ENCODE measurements at regions of chr5 and their contacts with region 1.

Region 1: GRCh38 chr5:139273572-139274289 is 19.8 kb upstream of the MATR3 start:
- DNase-seq: peak; percentile 80 to 94
- H3K4me3 ChIP-seq: peak overlapping the region; percentile 92
- H3K27ac ChIP-seq: peak overlapping the region; percentile 81
- H3K4me1 ChIP-seq: peaks cover 45% of the 10 kb centered on the region
- H3K27me3 ChIP-seq: no peaks in the 10 kb centered on the region
- CTCF ChIP-seq: no peak

Region 2: DNA sequence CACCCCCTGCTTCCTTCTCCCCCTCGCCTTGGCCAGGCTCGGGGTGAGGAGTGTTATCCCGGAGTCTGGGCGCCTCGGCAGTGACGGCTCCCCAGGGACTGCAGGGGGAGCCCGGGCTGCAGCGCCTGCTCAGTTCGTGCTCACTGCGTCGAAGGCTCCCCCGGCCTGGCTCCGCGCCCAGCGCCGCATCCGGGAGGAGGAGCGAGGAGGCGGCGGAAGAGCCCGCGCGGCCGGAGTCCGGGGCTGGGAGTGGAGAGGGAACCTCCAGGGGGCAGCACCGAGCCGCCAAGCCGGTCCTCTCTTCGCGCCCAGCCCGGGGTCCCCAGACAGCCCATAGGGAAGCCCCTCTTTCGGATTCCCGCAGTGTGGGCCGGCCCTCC is 809.7 kb before region 1 on chr5:
- CTCF ChIA-PET with region 1: no interaction called
- POLR2A ChIA-PET with region 1: interaction called, 11 read pairs
- intact Hi-C with region 1: no loop called
- DNase-seq: peak; percentile 78 to 94
- H3K4me3 ChIP-seq: peak overlapping the region; percentile 80
- H3K27ac ChIP-seq: peak overlapping the region; percentile 81
- H3K4me1 ChIP-seq: peaks cover 6% of the 10 kb centered on the region
- H3K27me3 ChIP-seq: no peaks in the 10 kb centered on the region
- CTCF ChIP-seq: peak; percentile 93

Region 3: DNA sequence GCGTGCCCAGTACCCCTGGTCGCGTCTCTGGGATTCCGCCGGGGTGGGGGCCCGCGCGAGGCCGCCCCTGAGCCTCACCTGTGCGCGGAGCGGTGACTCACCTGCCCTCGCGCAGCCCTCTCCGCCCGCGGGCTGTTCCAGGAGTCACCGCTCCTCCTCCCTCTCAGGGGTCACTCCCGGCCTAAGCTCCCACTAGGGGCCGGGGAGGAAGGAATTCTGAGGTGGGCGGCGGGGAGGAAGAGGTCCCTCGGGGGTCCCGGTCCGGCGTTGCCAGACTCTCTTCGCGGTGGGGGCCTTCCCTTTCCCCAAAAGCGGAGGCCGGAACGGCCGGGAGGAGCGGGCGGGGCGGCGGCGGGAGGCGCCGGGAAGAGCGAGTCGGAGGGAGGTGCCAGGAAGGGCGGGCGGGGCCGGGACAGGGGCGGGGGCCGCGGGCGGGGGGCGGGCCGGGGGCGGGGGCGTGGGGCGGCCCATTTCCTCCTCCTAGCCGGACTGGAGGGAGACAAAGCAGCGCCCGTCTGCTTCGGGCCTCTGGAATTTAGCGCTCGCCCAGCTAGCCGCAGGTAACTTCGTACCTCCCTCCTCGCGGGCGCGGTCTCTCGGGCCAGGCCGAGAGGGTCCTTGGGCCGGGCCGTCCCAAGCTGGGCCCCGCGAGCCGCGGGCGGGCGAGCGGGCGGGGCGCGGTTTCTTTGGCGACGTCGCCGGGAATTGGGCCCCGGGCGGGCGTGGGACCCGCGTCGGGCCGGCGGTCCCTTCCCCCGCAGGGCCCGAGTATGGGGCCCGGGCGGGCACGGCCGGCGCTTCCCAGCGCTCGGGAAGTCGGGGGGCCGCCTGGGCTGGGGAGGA is 520.6 kb before region 1 on chr5 and contains the start of gene CTNNA1:
- CTCF ChIA-PET with region 1: no interaction called
- POLR2A ChIA-PET with region 1: no interaction called
- intact Hi-C with region 1: loop called (anchors 10 kb)
- DNase-seq: peak; percentile 70 to 89
- H3K4me3 ChIP-seq: peak within 1 kb of the TSS; percentile 60
- H3K27ac ChIP-seq: peak within 1 kb of the TSS; percentile 74
- H3K4me1 ChIP-seq: peaks cover 30% of the 10 kb centered on the region
- H3K27me3 ChIP-seq: no peaks in the 10 kb centered on the region
- CTCF ChIP-seq: no peak
- total RNA-seq, gene CTNNA1: 91.7 and 94.0 TPM in 2 replicates

Region 4: GRCh38 chr5:138926688-138927448 is 346.9 kb before region 1 on chr5:
- CTCF ChIA-PET with region 1: no interaction called
- POLR2A ChIA-PET with region 1: interaction called, 17 read pairs
- intact Hi-C with region 1: no loop called
- DNase-seq: no peak
- H3K4me3 ChIP-seq: no peak overlapping the region
- H3K27ac ChIP-seq: no peak overlapping the region
- H3K4me1 ChIP-seq: no peaks in the 10 kb centered on the region
- H3K27me3 ChIP-seq: no peaks in the 10 kb centered on the region
- CTCF ChIP-seq: no peak

Region 5: DNA sequence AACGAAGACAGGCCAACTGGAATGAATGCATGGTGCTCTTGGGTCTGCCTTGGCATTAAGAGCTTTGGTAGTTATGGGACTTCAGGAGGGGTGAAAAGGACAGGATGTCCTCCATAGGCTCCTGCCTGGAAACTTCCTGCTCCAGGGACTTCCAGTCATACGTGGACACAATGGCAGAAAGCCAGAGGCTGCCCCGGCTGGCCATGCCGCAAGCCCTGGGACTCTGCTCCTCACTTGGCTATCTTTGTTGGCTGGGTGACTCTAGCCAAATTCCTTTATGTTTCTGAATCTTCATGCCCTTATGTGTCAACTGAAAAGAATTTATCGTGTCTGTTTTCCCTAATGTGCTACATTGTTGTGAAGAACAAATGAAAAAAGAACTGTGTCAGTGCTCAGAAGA is 212.5 kb before region 1 on chr5:
- CTCF ChIA-PET with region 1: no interaction called
- POLR2A ChIA-PET with region 1: interaction called, 16 read pairs
- intact Hi-C with region 1: no loop called
- DNase-seq: peak in 1 of 2 experiments; percentile 15
- H3K4me3 ChIP-seq: no peak overlapping the region
- H3K27ac ChIP-seq: no peak overlapping the region
- H3K4me1 ChIP-seq: peaks cover 38% of the 10 kb centered on the region
- H3K27me3 ChIP-seq: no peaks in the 10 kb centered on the region
- CTCF ChIP-seq: no peak

Region 6: GRCh38 chr5:139232147-139232724 is 41.5 kb before region 1 on chr5:
- CTCF ChIA-PET with region 1: interaction called, 10 read pairs
- POLR2A ChIA-PET with region 1: no interaction called
- intact Hi-C with region 1: no loop called
- DNase-seq: no peak
- H3K4me3 ChIP-seq: no peak overlapping the region
- H3K27ac ChIP-seq: no peak overlapping the region
- H3K4me1 ChIP-seq: no peaks in the 10 kb centered on the region
- H3K27me3 ChIP-seq: no peaks in the 10 kb centered on the region
- CTCF ChIP-seq: no peak

Region 7: DNA sequence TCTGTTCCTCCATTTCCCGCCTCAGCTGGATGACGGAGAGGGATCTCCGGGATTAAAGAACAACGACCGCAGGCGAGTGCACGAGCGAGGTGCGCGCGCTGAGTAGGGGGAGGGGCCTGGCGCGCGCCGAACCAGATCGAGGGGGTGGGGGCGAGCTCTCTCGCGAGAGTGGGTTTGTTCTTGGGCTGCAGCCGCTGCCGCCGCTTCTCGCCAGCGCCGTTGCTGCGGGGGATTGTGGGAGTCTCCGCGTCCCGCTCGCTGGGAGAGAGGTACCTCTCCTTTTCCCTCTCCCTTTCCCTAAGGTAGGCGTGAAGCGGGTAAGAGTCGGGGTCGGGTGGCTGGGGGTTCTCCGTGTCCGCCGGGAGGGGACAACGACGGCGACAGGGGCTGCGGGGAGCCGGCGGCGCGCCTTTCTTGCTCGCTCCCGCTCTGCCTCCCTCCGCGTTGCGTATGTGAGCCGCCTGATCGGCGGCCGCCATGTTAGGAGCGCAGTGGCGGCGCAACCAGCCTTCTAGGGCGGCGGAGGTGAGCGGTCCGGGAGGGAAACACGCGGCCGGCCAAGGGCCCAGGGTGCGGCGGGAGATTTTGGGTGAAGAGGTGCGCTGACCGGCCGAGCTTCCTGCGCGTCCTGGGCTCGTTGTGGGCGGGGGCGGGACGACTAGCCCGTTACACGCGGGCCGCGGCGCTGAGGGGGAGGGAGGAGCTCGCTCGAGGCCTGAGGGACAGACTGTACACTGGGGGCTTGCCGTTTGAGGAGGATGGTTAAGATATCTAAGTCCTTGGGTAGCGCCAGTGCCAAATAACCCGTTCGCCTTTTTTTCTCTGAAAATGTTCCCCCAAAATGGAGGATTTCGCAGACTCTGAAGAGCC is 20.0 kb after region 1 on chr5 and contains the start of gene MATR3:
- CTCF ChIA-PET with region 1: interaction called, 4 read pairs
- POLR2A ChIA-PET with region 1: interaction called, 12 read pairs
- intact Hi-C with region 1: no loop called
- DNase-seq: peak; percentile 85 to 92
- H3K4me3 ChIP-seq: peak within 1 kb of the TSS; percentile 94
- H3K27ac ChIP-seq: peak within 1 kb of the TSS; percentile 97
- H3K4me1 ChIP-seq: peaks cover 28% of the 10 kb centered on the region
- H3K27me3 ChIP-seq: no peaks in the 10 kb centered on the region
- CTCF ChIP-seq: no peak
- total RNA-seq, gene MATR3: 129 and 145 TPM in 2 replicates

Region 8: DNA sequence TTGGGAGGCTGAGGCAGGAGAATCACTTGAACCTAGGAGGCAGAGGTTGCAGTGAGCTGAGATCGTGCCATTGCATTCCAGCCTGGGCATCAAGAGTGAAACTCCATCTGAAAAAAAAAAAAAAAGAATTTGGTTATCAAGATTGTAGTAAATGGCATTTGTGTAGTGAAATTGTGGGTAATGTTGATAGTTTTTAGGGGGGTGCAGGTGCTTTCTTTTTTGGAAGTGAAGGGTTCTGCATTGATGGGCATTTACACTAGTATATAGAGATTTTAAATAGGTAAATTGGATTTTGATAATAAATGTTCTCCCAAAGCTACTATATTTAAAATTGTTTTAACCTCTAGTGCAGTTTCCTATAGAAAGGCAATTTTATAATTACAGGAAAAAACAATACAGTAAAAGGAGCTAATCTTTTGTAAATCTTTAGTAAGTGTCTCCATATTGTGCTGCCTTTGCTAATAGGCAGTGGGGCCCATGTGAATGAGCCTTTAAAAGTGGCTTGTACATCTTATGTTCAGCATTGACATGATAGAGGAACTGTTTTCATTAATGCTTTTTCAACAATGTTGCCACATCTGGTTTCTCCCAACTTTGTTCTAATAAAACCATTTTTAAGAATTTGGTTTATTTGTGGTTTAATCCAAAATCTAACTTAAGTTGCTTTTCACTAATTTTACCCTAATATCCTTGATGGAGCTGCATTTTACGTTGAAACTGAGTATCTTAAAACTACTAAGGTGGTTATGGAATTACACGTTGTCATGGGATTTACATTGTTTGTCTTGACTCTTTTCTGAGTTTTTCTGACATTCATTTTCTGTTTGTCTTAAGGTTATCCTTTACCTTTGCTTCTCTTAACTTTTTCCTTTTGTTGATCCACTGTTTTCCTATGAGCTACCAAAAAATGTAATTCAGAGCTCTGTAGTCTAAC is 30.9 kb after region 1 on chr5:
- CTCF ChIA-PET with region 1: no interaction called
- POLR2A ChIA-PET with region 1: no interaction called
- intact Hi-C with region 1: no loop called
- DNase-seq: no peak
- H3K4me3 ChIP-seq: no peak overlapping the region
- H3K27ac ChIP-seq: 0 out of 2 replicates have a peak overlapping the region, but pooled peaks have one; percentile 23
- H3K4me1 ChIP-seq: peaks cover 30% of the 10 kb centered on the region
- H3K27me3 ChIP-seq: no peaks in the 10 kb centered on the region
- CTCF ChIP-seq: no peak

Region 9: GRCh38 chr5:139492700-139493192 is 219.0 kb after region 1 on chr5:
- CTCF ChIA-PET with region 1: no interaction called
- POLR2A ChIA-PET with region 1: no interaction called
- intact Hi-C with region 1: no loop called
- DNase-seq: peak in 1 of 2 experiments; percentile 51
- H3K4me3 ChIP-seq: no peak overlapping the region
- H3K27ac ChIP-seq: no peak overlapping the region
- H3K4me1 ChIP-seq: peaks cover 37% of the 10 kb centered on the region
- H3K27me3 ChIP-seq: no peaks in the 10 kb centered on the region
- CTCF ChIP-seq: no peak

Measured in PC-9 (cell line).